PC-9 (cell line): ENCODE measurements at regions of chr5 and their contacts with region 1.

Region 1: DNA sequence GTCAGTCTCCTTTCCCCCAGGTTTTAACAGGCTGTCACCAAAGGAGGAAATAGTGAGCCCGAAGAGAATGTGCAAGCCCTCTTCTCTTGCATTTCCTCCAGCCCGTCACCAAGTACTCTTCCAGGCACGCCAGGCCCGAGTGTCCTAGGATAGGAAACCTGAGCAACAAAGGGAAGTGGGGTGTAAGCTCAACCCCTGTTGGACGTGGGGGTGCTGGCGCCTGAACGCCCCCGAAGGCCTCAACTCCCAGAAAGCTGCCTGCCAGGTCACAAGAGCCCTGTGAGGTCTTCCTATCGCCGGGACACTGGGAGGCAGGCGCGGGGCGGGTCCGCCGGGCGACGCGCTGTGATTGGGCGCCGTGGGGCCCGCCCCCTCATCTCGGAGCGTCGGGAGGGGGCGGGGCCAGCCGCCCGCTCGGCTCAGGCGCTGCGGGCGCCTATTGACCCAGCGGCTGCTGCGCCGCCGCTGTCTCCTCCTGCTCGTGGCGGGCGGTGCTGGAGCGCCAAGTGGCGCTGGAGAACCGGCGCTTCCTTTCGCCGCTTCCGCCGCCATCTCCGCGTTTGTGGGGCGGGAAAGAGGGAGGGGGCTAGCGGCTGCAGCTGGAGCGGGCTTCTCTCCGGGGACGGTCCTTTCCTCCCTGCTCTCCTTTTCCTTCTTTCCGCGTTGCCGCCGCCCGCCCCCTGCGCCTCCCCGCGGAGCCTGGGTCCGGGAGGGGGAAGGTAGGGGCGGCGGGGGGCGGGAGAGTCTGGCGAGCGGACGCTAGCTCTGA is 572 bp upstream of the MAN2A1 start:
- DNase-seq: peak; percentile 81 to 86
- H3K4me3 ChIP-seq: peak overlapping the region; percentile 91
- H3K27ac ChIP-seq: peak overlapping the region; percentile 66
- H3K4me1 ChIP-seq: peaks cover 18% of the 10 kb centered on the region
- H3K27me3 ChIP-seq: no peaks in the 10 kb centered on the region
- CTCF ChIP-seq: peak; percentile 29; the same call in 1 of the 2 replicates

Region 2: DNA sequence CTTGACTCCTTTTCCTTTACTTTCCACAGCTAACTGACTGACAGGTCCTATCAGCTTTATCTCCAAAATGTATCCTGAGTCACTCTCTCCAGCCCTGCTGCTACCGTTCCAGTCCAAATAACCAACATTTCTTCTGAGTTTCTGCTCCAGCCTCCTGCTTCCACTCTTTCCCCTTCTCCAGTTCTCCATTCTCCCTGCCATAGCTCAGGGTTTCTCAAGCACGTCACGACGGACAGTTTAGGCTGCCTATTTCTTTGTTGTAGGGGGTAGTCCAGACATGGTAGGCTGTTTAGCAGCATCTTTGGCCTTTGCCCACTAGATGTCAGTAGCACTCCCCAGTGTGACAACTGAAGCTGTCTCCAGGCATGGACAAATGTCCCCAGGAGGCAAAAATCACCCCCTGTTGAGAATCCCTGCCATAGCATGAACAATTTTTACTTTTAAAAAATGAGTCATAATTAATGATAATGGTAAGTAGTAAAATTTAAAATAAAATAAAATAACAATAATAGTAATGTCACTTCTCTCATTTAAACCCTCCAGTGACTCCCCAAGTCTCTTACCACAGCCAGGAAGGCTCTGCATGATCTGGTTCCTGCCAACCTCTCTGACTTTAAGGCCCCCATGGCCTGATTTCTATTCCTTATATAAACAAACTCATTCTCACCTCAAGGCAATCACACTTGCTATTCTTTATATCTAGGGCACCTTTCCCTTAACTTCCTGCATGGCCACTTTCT is 1046.8 kb before region 1 on chr5:
- CTCF ChIA-PET with region 1: no interaction called
- POLR2A ChIA-PET with region 1: interaction called, 3 read pairs
- intact Hi-C with region 1: loop called (anchors 2 kb)
- DNase-seq: peak; percentile 55 to 57
- H3K4me3 ChIP-seq: peak overlapping the region; percentile 30; the same call in 1 of the 2 replicates
- H3K27ac ChIP-seq: no peak overlapping the region
- H3K4me1 ChIP-seq: peaks cover 6% of the 10 kb centered on the region; the same call in 1 of the 2 replicates
- H3K27me3 ChIP-seq: no peaks in the 10 kb centered on the region
- CTCF ChIP-seq: peak; percentile 88

Region 3: GRCh38 chr5:109739741-109740728 is 50.9 kb after region 1 on chr5:
- CTCF ChIA-PET with region 1: interaction called, 3 read pairs
- POLR2A ChIA-PET with region 1: interaction called, 11 read pairs
- intact Hi-C with region 1: loop called (anchors 1 kb)
- DNase-seq: peak; percentile 39 to 49
- H3K4me3 ChIP-seq: no peak overlapping the region
- H3K27ac ChIP-seq: peak overlapping the region; percentile 27; the same call in 1 of the 2 replicates
- H3K4me1 ChIP-seq: peaks cover 29% of the 10 kb centered on the region
- H3K27me3 ChIP-seq: no peaks in the 10 kb centered on the region
- CTCF ChIP-seq: no peak

Region 4: GRCh38 chr5:109759306-109759705 is 70.2 kb after region 1 on chr5:
- CTCF ChIA-PET with region 1: no interaction called
- POLR2A ChIA-PET with region 1: no interaction called
- intact Hi-C with region 1: no loop called
- DNase-seq: no peak
- H3K4me3 ChIP-seq: no peak overlapping the region
- H3K27ac ChIP-seq: no peak overlapping the region
- H3K4me1 ChIP-seq: 0 out of 2 replicates have a peak, but pooled peaks cover under 1% of the 10 kb centered on the region
- H3K27me3 ChIP-seq: no peaks in the 10 kb centered on the region
- CTCF ChIP-seq: no peak

Region 5: GRCh38 chr5:109844148-109844547 is 155.0 kb after region 1 on chr5:
- CTCF ChIA-PET with region 1: no interaction called
- POLR2A ChIA-PET with region 1: no interaction called
- intact Hi-C with region 1: loop called (anchors 2 kb)
- DNase-seq: no peak
- H3K4me3 ChIP-seq: no peak overlapping the region
- H3K27ac ChIP-seq: no peak overlapping the region
- H3K4me1 ChIP-seq: no peaks in the 10 kb centered on the region
- H3K27me3 ChIP-seq: no peaks in the 10 kb centered on the region
- CTCF ChIP-seq: peak; percentile 55

Region 6: GRCh38 chr5:110625376-110625999 is 936.3 kb after region 1 on chr5:
- CTCF ChIA-PET with region 1: no interaction called
- POLR2A ChIA-PET with region 1: no interaction called
- intact Hi-C with region 1: loop called (anchors 5 kb)
- DNase-seq: peak in 1 of 2 experiments; percentile 39
- H3K4me3 ChIP-seq: no peak overlapping the region
- H3K27ac ChIP-seq: no peak overlapping the region
- H3K4me1 ChIP-seq: no peaks in the 10 kb centered on the region
- H3K27me3 ChIP-seq: no peaks in the 10 kb centered on the region
- CTCF ChIP-seq: peak; percentile 74; the same call in 1 of the 2 replicates